Activated naive CD4-positive, alpha-beta T cell treated with anti-CD3 and anti-CD28 coated beads for 36 hours (primary cell): ENCODE measurements at regions of chr16 and their contacts with region 1.

Region 1: DNA sequence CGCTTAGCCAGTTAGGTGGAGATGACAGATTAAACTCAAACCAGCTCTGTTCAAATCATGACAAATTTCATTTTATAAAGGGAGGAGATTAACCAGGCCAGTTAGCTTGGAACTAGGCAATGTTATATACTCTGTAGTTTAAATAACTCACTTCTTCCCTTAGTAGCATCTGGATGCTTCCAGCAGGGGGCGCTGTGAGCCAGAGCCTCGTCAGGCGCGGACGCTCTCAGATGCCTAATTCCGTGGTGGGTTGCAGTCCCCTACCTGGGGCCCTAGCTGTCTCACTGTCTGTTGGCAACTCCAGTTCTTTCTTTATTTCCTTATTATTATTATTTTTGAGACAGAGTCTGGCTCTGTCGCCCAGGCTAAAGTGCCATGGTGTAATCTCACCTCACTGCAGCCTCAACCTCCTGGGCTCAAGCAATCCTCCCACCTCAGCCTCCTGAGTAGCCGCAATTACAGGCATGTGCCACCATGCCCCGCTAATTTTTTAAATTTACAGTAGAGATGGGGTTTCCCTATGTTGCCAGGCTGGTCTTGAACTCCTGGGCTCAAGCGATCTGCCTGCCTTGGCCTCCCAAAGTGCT is 17.3 kb upstream of the WFDC1 start:
- DNase-seq: peak; percentile 86
- H3K4me3 Mint-ChIP-seq: no peak overlapping the region
- H3K27ac Mint-ChIP-seq: no peak overlapping the region
- H3K4me1 Mint-ChIP-seq: no peaks in the 10 kb centered on the region
- H3K27me3 Mint-ChIP-seq: no peaks in the 10 kb centered on the region

Region 2: GRCh38 chr16:84258266-84258665 is 19.1 kb before region 1 on chr16:
- CTCF ChIA-PET with region 1: interaction called, 10 read pairs
- intact Hi-C with region 1: no loop called
- DNase-seq: no peak
- H3K4me3 Mint-ChIP-seq: no peak overlapping the region
- H3K27ac Mint-ChIP-seq: no peak overlapping the region
- H3K4me1 Mint-ChIP-seq: no peaks in the 10 kb centered on the region
- H3K27me3 Mint-ChIP-seq: peaks cover 10% of the 10 kb centered on the region

Region 3: DNA sequence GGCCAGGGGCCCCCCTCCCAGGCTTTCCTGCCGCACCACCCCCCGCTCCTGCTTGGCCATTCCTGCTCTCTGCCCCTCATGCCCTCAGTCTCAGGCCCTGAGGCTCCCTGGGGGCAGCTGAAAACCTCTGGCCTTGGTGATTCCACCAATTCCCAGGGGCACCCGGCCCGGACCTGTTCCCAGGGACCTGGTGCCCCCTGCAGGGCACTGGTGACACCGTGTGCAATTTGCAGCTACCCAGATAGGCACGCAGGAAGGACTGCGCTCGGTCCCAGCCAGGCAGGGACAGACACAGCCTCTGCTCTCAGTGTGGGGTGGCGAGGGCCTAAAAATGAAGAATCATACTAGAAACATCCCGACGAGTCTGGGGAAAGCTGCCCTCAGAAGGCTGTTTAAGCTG is 30.8 kb after region 1 on chr16:
- CTCF ChIA-PET with region 1: interaction called, 3 read pairs
- intact Hi-C with region 1: loop called (anchors 2 kb)
- DNase-seq: peak; percentile 23
- H3K4me3 Mint-ChIP-seq: no peak overlapping the region
- H3K27ac Mint-ChIP-seq: no peak overlapping the region
- H3K4me1 Mint-ChIP-seq: no peaks in the 10 kb centered on the region
- H3K27me3 Mint-ChIP-seq: peaks cover 20% of the 10 kb centered on the region

Region 4: DNA sequence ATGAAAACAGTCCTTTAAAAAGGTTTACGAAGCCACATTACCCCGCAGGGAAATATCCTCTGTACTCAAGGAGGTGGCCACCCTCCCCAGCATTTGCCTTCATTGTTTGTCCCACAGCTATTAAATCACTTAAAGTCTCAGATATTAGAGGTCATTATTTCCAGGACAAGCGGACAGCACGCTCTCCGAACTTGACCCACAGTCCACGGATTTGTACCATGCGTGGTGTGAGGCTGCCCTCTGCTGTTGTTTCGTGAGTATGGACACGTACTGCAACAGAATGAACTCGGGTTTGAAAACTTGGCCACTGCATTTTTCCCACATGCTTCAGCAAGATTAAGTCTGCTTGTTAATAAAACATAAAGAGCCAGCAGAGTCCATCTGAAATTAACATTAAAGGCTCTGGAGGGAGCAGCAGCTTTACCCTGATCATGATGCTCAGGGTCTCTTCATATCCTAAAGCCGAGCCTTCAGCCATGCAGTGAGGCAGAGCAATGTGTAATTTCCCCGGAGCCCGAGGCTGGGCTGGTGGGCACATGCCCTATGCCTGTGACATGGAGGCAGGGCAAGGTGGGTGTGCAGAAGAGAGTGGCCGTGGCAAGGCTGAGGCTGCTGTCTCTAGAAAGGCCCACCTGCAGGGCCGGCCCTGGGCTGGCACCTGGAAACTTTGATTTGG is 207.4 kb after region 1 on chr16:
- CTCF ChIA-PET with region 1: interaction called, 16 read pairs
- intact Hi-C with region 1: loop called (anchors 1 kb)
- DNase-seq: peak; percentile 49
- H3K4me3 Mint-ChIP-seq: no peak overlapping the region
- H3K27ac Mint-ChIP-seq: no peak overlapping the region
- H3K4me1 Mint-ChIP-seq: no peaks in the 10 kb centered on the region
- H3K27me3 Mint-ChIP-seq: no peaks in the 10 kb centered on the region